ENCODE measurements at regions of chr11 and their contacts with region 1.

Region 1: GRCh38 chr11:78798660-78799059 is 224.0 kb upstream of the NARS2 start:
- DNase-seq: peak; percentile 59
- H3K4me3 ChIP-seq: no peak overlapping the region
- H3K27ac ChIP-seq: no peak overlapping the region
- H3K4me1 ChIP-seq: peaks cover 41% of the 10 kb centered on the region
- H3K27me3 ChIP-seq: no peaks in the 10 kb centered on the region
- CTCF ChIP-seq: peak; percentile 85 to 94
- POLR2A ChIP-seq: no peak

Region 2: DNA sequence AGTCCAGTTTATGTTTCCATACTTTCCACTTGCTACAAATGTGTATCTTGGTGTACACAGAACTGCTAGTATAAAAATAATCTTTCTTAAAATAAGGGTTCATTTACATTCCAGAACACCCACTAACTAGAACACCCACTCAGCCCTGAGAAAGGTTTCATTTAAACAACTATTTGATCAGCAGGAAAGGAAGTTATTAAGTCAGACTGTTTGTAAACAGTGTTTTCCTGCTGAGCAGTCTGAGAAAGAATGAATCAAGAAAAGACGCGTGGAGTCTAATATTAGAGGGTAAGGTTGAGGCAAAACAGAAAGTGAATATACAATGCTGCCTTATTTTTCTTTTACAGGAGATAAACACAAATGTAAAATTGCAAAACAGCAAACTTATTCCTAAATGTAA is 256.7 kb before region 1 on chr11:
- CTCF ChIA-PET with region 1: no interaction called
- POLR2A ChIA-PET with region 1: no interaction called
- dilution Hi-C with region 1: no loop called
- intact Hi-C with region 1: no loop called
- DNase-seq: peak; percentile 48
- H3K4me3 ChIP-seq: no peak overlapping the region
- H3K27ac ChIP-seq: no peak overlapping the region
- H3K4me1 ChIP-seq: peaks cover 6% of the 10 kb centered on the region
- H3K27me3 ChIP-seq: no peaks in the 10 kb centered on the region
- CTCF ChIP-seq: no peak
- POLR2A ChIP-seq: no peak

Region 3: DNA sequence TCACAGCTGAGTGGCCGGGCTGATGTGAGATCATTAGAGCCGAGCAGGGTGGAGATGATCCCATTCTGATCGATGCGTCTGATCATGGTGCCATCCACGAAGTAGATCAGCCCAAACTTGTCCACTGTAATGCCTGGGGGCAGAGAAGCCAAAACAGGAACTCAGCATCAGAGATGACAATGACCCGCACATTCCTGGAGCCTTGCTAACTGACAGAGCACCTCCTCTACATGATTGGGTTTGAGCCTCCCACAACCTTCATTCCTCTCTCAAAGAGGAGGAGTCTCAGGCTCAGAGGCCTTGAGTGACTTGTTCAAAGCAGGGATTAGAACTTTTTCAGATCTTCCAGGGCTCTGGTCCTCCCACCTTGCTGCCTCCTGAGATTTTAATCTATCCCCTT is 90.3 kb before region 1 on chr11:
- CTCF ChIA-PET with region 1: no interaction called
- POLR2A ChIA-PET with region 1: no interaction called
- dilution Hi-C with region 1: no loop called
- intact Hi-C with region 1: no loop called
- DNase-seq: no peak
- H3K4me3 ChIP-seq: no peak overlapping the region
- H3K27ac ChIP-seq: no peak overlapping the region
- H3K4me1 ChIP-seq: no peaks in the 10 kb centered on the region
- H3K27me3 ChIP-seq: no peaks in the 10 kb centered on the region
- CTCF ChIP-seq: no peak
- POLR2A ChIP-seq: no peak

Region 4: GRCh38 chr11:78786086-78786485 is 12.6 kb before region 1 on chr11:
- CTCF ChIA-PET with region 1: interaction called, 10 read pairs
- POLR2A ChIA-PET with region 1: no interaction called
- dilution Hi-C with region 1: no loop called
- intact Hi-C with region 1: no loop called
- DNase-seq: no peak
- H3K4me3 ChIP-seq: no peak overlapping the region
- H3K27ac ChIP-seq: no peak overlapping the region
- H3K4me1 ChIP-seq: no peaks in the 10 kb centered on the region
- H3K27me3 ChIP-seq: no peaks in the 10 kb centered on the region
- CTCF ChIP-seq: no peak
- POLR2A ChIP-seq: no peak

Region 5: DNA sequence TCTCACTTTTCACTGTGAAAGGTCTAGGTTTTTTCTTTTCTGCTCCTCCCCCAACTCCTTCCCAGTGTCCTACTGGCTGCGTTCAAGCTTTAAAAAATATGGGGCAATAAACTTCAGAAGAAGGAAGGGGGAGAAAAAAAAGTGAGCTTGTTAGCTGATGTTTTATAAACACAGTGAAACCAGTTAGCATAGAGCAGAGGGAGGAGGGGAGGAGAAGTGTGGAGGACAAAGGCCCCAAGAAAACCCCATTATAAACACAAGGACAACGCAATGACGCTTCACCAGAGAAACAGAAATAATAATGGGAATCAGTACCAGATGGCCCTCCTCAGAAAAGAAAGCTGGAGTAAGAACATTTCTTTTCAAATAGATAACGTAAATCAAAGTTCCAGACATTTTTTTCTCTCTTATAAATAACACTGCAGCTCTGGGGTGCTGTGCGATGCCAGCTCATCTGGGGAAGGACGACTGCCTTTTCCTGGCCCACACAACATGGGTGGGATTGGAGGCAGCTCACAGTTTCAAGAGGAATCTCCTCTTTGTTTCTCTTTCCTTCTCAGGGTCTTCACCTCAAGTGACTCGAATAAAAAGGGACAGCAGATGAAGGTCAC is 11.4 kb after region 1 on chr11:
- CTCF ChIA-PET with region 1: interaction called, 38 read pairs
- POLR2A ChIA-PET with region 1: no interaction called
- dilution Hi-C with region 1: no loop called
- intact Hi-C with region 1: no loop called
- DNase-seq: no peak
- H3K4me3 ChIP-seq: no peak overlapping the region
- H3K27ac ChIP-seq: no peak overlapping the region
- H3K4me1 ChIP-seq: peaks cover 4% of the 10 kb centered on the region
- H3K27me3 ChIP-seq: no peaks in the 10 kb centered on the region
- CTCF ChIP-seq: no peak
- POLR2A ChIP-seq: no peak

Region 6: DNA sequence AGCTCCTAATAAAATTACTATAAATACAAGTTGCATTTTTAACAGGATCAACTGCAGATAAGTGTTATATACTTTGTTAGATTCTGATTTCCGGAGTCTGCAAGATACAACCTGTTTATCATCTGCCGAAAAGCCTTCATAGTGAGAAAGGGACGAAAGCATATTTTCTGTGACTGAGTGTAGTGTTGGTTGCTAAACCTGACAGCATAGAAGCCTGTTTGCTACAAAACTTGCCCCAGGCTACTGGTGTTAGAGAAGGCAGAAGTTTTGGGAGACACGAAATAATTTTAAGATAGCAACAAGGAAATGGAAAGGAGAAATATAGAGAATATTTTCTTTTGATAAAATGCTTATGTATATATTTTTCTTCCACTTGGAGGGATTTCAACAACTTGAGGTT is 19.5 kb after region 1 on chr11:
- CTCF ChIA-PET with region 1: interaction called, 11 read pairs
- POLR2A ChIA-PET with region 1: no interaction called
- dilution Hi-C with region 1: no loop called
- intact Hi-C with region 1: no loop called
- DNase-seq: no peak
- H3K4me3 ChIP-seq: no peak overlapping the region
- H3K27ac ChIP-seq: no peak overlapping the region
- H3K4me1 ChIP-seq: no peaks in the 10 kb centered on the region
- H3K27me3 ChIP-seq: peaks cover 4 to 10% of the 10 kb centered on the region in 2 experiments
- CTCF ChIP-seq: no peak
- POLR2A ChIP-seq: no peak

Region 7: GRCh38 chr11:78961247-78961646 is 162.6 kb after region 1 on chr11:
- CTCF ChIA-PET with region 1: interaction called, 9 read pairs
- POLR2A ChIA-PET with region 1: no interaction called
- dilution Hi-C with region 1: no loop called
- intact Hi-C with region 1: loop called (anchors 2 kb)
- DNase-seq: peak; percentile 29
- H3K4me3 ChIP-seq: no peak overlapping the region
- H3K27ac ChIP-seq: no peak overlapping the region
- H3K4me1 ChIP-seq: peaks cover 7% of the 10 kb centered on the region
- H3K27me3 ChIP-seq: peaks cover 1 to 4% of the 10 kb centered on the region in 2 experiments
- CTCF ChIP-seq: peak; percentile 15 to 32
- POLR2A ChIP-seq: no peak

Region 8: DNA sequence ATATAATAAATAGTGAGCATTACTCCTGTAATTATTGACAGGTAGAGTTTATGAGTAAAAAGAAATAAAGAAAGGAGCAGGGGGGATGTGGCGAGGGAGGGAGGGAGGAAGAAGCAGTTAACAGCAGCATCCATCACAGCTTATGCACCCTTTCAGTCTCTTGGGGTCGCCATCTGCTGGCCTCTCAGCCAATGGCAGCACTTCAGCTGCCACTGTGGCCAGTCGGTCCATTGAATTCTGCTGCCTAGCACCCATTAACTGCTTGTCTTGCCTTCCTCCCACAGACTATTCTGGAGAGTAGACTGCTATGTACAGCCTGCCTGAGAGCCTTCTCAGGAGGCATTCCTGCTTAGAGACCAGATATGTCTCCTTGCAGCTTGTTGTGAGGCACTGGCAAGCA is 253.9 kb after region 1 on chr11:
- CTCF ChIA-PET with region 1: interaction called, 3 read pairs
- POLR2A ChIA-PET with region 1: no interaction called
- dilution Hi-C with region 1: no loop called
- intact Hi-C with region 1: loop called (anchors 1 kb)
- DNase-seq: peak; percentile 28
- H3K4me3 ChIP-seq: no peak overlapping the region
- H3K27ac ChIP-seq: no peak overlapping the region
- H3K4me1 ChIP-seq: no peaks in the 10 kb centered on the region
- H3K27me3 ChIP-seq: peaks cover 9 to 14% of the 10 kb centered on the region in 2 experiments
- CTCF ChIP-seq: peak in 1 of 2 donors; percentile 66
- POLR2A ChIP-seq: no peak

Region 9: DNA sequence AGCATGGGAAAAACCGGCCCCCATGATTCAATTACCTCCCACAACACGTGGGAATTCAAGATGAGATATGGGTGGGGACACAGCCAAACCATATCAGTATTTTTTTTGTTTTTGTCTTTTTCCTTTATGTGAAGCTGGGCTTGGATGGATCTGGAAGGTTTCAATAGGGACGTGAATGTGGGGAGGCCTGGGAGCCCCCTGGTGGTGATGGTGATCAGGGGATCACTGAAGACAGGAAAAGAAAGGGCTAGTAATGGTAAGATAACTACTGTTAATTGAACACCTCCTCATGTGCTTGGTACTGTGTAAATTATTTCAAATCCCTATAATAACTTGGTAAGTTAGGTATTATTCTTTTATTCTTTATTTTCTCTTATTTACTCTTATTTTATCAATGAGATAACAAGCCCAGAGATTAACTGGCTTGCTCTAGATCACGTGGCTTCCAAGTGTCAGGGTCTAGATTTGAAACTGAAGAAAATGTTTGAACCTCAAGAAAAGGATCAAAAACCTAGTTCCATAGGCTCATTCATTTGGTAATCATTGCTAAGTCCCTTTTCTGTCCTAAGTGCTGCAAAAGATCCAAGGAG is 278.0 kb after region 1 on chr11:
- CTCF ChIA-PET with region 1: interaction called, 4 read pairs
- POLR2A ChIA-PET with region 1: no interaction called
- dilution Hi-C with region 1: no loop called
- intact Hi-C with region 1: loop called (anchors 5 kb)
- DNase-seq: peak; percentile 50
- H3K4me3 ChIP-seq: no peak overlapping the region
- H3K27ac ChIP-seq: no peak overlapping the region
- H3K4me1 ChIP-seq: no peaks in the 10 kb centered on the region
- H3K27me3 ChIP-seq: no peaks in the 10 kb centered on the region
- CTCF ChIP-seq: peak; percentile 63 to 69
- POLR2A ChIP-seq: no peak